Mammary epithelial cell (primary cell): ENCODE measurements at regions of chr1 and their contacts with region 1.

Region 1: GRCh38 chr1:199684686-199685273 is 342.7 kb upstream of the NR5A2 start:
- DNase-seq: peak; percentile 56
- H3K4me3 ChIP-seq: no peak overlapping the region
- H3K27ac ChIP-seq: no peak overlapping the region
- H3K4me1 ChIP-seq: peaks cover 16% of the 10 kb centered on the region
- H3K27me3 ChIP-seq: no peaks in the 10 kb centered on the region
- CTCF ChIP-seq: peak; percentile 85 to 90

Region 2: GRCh38 chr1:199667089-199667488 is 17.7 kb before region 1 on chr1:
- CTCF ChIA-PET with region 1: no interaction called
- dilution Hi-C with region 1: no loop called
- in situ Hi-C with region 1: no loop called
- intact Hi-C with region 1: no loop called
- DNase-seq: peak; percentile 25
- H3K4me3 ChIP-seq: no peak overlapping the region
- H3K27ac ChIP-seq: no peak overlapping the region
- H3K4me1 ChIP-seq: no peaks in the 10 kb centered on the region
- H3K27me3 ChIP-seq: no peaks in the 10 kb centered on the region
- CTCF ChIP-seq: no peak

Region 3: DNA sequence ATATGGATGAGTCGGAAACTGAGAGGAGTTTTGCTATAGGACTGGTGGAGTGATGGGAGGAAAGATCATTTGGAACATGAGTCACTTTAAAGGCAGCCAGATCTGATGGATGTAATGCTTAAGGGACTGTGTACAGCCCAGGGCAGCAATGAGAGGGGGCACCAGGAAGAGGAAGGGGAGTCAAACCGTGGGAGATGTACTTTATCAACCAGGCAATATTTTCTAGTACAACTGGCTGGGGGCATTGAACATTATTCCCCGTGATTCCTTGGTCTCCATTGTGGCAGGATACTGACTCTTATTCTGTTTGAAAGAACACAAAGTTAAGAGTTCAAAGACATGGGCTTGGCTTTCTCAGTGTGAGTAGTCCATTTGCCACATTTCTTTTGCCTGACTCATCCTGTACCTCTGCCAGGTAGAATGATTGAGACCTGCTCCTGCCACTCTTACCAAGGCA is 74.5 kb after region 1 on chr1:
- CTCF ChIA-PET with region 1: no interaction called
- dilution Hi-C with region 1: no loop called
- in situ Hi-C with region 1: no loop called
- intact Hi-C with region 1: loop called (anchors 2 kb)
- DNase-seq: peak; percentile 88
- H3K4me3 ChIP-seq: peak overlapping the region in 2 of 3 experiments; percentile 8 to 36
- H3K27ac ChIP-seq: peak overlapping the region; percentile 92
- H3K4me1 ChIP-seq: peaks cover 25% of the 10 kb centered on the region
- H3K27me3 ChIP-seq: no peaks in the 10 kb centered on the region
- CTCF ChIP-seq: no peak

Region 4: GRCh38 chr1:200038981-200039848 is 354.4 kb after region 1 on chr1:
- CTCF ChIA-PET with region 1: no interaction called
- dilution Hi-C with region 1: no loop called
- in situ Hi-C with region 1: no loop called
- intact Hi-C with region 1: loop called (anchors 5 kb)
- DNase-seq: peak; percentile 32
- H3K4me3 ChIP-seq: peak overlapping the region; percentile 46 to 56 (median 50)
- H3K27ac ChIP-seq: no peak overlapping the region
- H3K4me1 ChIP-seq: peaks cover 21% of the 10 kb centered on the region
- H3K27me3 ChIP-seq: peaks cover 80% of the 10 kb centered on the region
- CTCF ChIP-seq: no peak

Region 5: GRCh38 chr1:200265051-200265450 is 580.3 kb after region 1 on chr1:
- CTCF ChIA-PET with region 1: interaction called, 3 read pairs
- dilution Hi-C with region 1: no loop called
- in situ Hi-C with region 1: loop called in 1 of 2 experiments (anchors 5 kb)
- intact Hi-C with region 1: no loop called
- DNase-seq: no peak
- H3K4me3 ChIP-seq: no peak overlapping the region
- H3K27ac ChIP-seq: no peak overlapping the region
- H3K4me1 ChIP-seq: no peaks in the 10 kb centered on the region
- H3K27me3 ChIP-seq: peaks cover 2% of the 10 kb centered on the region
- CTCF ChIP-seq: no peak

Region 6: GRCh38 chr1:200409761-200410565 is 725.2 kb after region 1 on chr1 and contains the start of gene ZNF281:
- CTCF ChIA-PET with region 1: interaction called, 16 read pairs
- dilution Hi-C with region 1: no loop called
- in situ Hi-C with region 1: no loop called
- intact Hi-C with region 1: no loop called
- DNase-seq: peak; percentile 90
- H3K4me3 ChIP-seq: peak within 1 kb of the TSS; percentile 91 to 98 (median 94)
- H3K27ac ChIP-seq: peak within 1 kb of the TSS; percentile 78
- H3K4me1 ChIP-seq: peaks cover 46% of the 10 kb centered on the region
- H3K27me3 ChIP-seq: no peaks in the 10 kb centered on the region
- CTCF ChIP-seq: no peak
- total RNA-seq, gene ZNF281: 27.5 to 42.2 TPM

Region 7: DNA sequence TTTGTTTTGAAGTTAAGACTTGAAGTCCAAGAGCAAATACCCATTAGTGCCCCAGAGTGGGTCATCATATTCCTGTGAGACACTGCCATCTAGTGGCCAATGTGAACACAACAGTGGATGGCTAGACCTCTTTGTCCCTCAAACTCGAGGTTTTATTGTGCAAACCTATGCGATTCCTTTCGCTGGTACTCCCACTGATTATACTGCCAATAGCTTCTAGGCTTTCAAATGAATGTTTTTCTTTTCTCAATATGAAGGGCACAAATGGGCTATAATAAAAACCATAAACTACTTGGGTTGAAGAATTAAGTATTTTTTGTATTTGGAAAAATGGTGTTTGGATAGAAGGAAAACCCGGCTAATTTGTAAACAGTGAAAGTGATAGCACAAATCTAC is 825.4 kb after region 1 on chr1:
- CTCF ChIA-PET with region 1: no interaction called
- dilution Hi-C with region 1: no loop called
- in situ Hi-C with region 1: no loop called
- intact Hi-C with region 1: loop called (anchors 1 kb)
- DNase-seq: peak; percentile 60
- H3K4me3 ChIP-seq: no peak overlapping the region
- H3K27ac ChIP-seq: no peak overlapping the region
- H3K4me1 ChIP-seq: no peaks in the 10 kb centered on the region
- H3K27me3 ChIP-seq: peaks cover 3% of the 10 kb centered on the region
- CTCF ChIP-seq: peak; percentile 90 to 95